Activated CD4-positive, alpha-beta T cell treated with anti-CD3 and anti-CD28 coated beads, Interleukin-2, amount 10 ng/mL, durations not matched to agents 24 days and 14 days (primary cell): ENCODE measurements at regions of chr7 and their contacts with region 1.

Region 1: GRCh38 chr7:131007394-131008330 is 273.7 kb upstream of the KLF14 start:
- DNase-seq: peak; percentile 89
- H3K4me3 Mint-ChIP-seq: peak overlapping the region; percentile 41
- H3K27ac Mint-ChIP-seq: peak overlapping the region; percentile 86
- H3K4me1 Mint-ChIP-seq: peaks cover 54% of the 10 kb centered on the region
- H3K27me3 Mint-ChIP-seq: no peaks in the 10 kb centered on the region

Region 2: DNA sequence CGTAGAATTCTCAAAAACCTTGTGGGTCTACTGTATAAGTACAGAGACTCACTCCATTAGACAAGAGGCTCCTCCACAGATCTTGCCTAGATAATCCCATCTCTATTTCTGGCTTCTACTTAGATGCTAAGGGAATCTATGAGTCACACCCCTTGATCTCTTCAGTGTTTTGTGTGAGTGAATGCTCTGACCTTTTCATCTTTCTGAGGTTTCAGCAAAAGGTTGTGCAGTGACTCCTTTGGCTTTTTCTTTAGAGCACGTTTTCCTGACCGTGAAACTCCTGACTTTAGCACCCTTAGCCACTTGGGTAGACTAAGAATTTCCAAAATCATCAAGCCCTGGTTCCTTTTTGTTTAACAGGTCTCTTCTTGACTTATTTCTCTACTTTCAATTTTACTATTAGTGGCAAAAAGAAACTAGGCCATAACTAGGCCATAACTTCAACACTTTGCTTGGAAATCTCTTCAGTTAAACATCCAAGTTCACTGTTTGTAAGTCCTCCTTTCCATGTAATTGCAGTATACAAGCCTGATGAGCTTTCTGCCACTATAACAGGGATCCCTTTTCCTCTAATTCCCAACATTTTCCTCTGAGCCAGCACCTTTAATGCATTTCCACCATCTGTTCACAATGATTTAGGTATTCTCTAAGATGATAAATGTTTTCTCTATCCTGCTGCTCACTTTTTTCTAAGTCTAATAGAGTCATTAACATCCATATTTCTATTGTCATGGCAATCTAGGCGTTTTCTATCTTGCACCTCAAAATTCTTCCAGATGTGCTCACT is 358.5 kb before region 1 on chr7:
- intact Hi-C with region 1: no loop called
- DNase-seq: peak; percentile 67
- H3K4me3 Mint-ChIP-seq: peak overlapping the region; percentile 50
- H3K27ac Mint-ChIP-seq: peak overlapping the region; percentile 86
- H3K4me1 Mint-ChIP-seq: peaks cover 35% of the 10 kb centered on the region
- H3K27me3 Mint-ChIP-seq: no peaks in the 10 kb centered on the region

Region 3: DNA sequence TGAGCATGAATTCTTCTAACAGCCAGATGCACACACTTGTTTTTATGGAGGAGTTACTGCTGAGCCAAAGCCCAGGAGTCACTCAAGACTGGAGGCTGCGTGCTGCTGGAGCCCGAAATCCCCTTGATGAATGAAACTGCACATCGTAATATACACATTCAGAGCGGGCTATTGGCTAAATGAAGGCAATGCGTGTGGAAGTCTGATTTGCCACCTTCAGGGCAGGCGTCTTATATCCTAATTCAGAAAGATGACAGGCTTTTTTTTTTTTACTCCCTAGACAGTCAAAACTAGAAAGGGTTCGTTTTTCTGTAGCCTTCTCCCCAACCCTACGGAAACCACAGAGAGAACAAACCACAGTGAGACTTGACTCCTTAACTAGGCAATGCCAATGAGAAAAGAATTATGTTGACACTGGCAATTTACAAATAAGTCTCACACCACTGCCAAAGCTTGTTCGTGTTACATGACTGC is 46.5 kb before region 1 on chr7:
- intact Hi-C with region 1: loop called (anchors 1 kb)
- DNase-seq: peak; percentile 96
- H3K4me3 Mint-ChIP-seq: peak overlapping the region; percentile 88
- H3K27ac Mint-ChIP-seq: peak overlapping the region; percentile 97
- H3K4me1 Mint-ChIP-seq: peaks cover 36% of the 10 kb centered on the region
- H3K27me3 Mint-ChIP-seq: no peaks in the 10 kb centered on the region

Region 4: GRCh38 chr7:130982160-130982638 is 25.5 kb before region 1 on chr7:
- intact Hi-C with region 1: loop called (anchors 1 kb)
- DNase-seq: peak; percentile 78
- H3K4me3 Mint-ChIP-seq: no peak overlapping the region
- H3K27ac Mint-ChIP-seq: no peak overlapping the region
- H3K4me1 Mint-ChIP-seq: peaks cover 34% of the 10 kb centered on the region
- H3K27me3 Mint-ChIP-seq: no peaks in the 10 kb centered on the region

Region 5: GRCh38 chr7:131021460-131021859 is 13.8 kb after region 1 on chr7:
- intact Hi-C with region 1: loop called (anchors 1 kb)
- DNase-seq: no peak
- H3K4me3 Mint-ChIP-seq: peak overlapping the region; percentile 31
- H3K27ac Mint-ChIP-seq: peak overlapping the region; percentile 76
- H3K4me1 Mint-ChIP-seq: peaks cover 45% of the 10 kb centered on the region
- H3K27me3 Mint-ChIP-seq: no peaks in the 10 kb centered on the region

Region 6: GRCh38 chr7:131040467-131040932 is 32.8 kb after region 1 on chr7:
- intact Hi-C with region 1: loop called (anchors 5 kb)
- DNase-seq: peak; percentile 87
- H3K4me3 Mint-ChIP-seq: peak overlapping the region; percentile 38
- H3K27ac Mint-ChIP-seq: peak overlapping the region; percentile 11
- H3K4me1 Mint-ChIP-seq: peaks cover 25% of the 10 kb centered on the region
- H3K27me3 Mint-ChIP-seq: no peaks in the 10 kb centered on the region

Region 7: DNA sequence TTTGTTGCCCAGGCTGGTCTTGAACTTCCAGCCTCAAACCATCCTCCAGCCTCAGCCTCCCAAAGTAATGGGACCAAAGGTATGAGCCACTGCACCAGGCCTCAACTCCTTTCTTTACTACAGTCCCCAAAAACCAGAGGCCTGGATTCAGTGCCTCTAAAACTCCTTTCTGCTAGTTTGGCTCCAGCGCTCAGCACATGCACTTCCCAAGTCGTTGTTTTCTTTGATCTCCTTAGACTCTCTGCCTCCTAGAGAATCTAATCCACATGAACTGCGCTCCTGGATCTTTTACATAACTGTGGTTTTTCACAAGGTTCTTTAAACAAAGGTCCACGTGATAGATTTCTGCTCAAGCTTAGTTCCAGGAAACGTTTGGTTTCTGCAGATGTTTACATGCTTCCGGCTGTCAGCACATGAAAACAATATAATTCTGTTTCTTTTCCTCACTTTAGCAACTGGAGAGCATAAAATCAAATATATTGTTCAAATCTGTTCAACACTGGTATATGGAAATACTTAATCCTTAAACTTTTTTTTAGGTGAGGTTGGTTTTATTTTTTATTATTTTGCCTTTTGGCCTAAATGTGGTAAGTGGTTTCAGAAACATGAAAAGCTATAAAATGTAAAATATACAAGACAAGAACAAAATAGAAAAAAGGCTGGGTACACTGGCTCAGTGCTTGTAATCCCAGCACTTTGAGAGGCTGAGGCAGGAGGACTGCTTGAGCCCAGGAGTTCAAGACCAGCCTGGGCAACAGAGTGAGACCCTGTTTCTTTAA is 49.5 kb after region 1 on chr7:
- intact Hi-C with region 1: no loop called
- DNase-seq: peak; percentile 86
- H3K4me3 Mint-ChIP-seq: peak overlapping the region; percentile 74
- H3K27ac Mint-ChIP-seq: peak overlapping the region; percentile 86
- H3K4me1 Mint-ChIP-seq: peaks cover 42% of the 10 kb centered on the region
- H3K27me3 Mint-ChIP-seq: no peaks in the 10 kb centered on the region

Region 8: GRCh38 chr7:131071786-131072504 is 64.3 kb after region 1 on chr7:
- intact Hi-C with region 1: no loop called
- DNase-seq: peak; percentile 78
- H3K4me3 Mint-ChIP-seq: peak overlapping the region; percentile 16
- H3K27ac Mint-ChIP-seq: no peak overlapping the region
- H3K4me1 Mint-ChIP-seq: peaks cover 35% of the 10 kb centered on the region
- H3K27me3 Mint-ChIP-seq: no peaks in the 10 kb centered on the region

Region 9: GRCh38 chr7:131265227-131265626 is 257.6 kb after region 1 on chr7:
- intact Hi-C with region 1: no loop called
- DNase-seq: no peak
- H3K4me3 Mint-ChIP-seq: no peak overlapping the region
- H3K27ac Mint-ChIP-seq: no peak overlapping the region
- H3K4me1 Mint-ChIP-seq: no peaks in the 10 kb centered on the region
- H3K27me3 Mint-ChIP-seq: peaks cover 13% of the 10 kb centered on the region